Naive thymus-derived CD8-positive, alpha-beta T cell (primary cell): ENCODE measurements at regions of chr1 and their contacts with region 1.

Region 1: DNA sequence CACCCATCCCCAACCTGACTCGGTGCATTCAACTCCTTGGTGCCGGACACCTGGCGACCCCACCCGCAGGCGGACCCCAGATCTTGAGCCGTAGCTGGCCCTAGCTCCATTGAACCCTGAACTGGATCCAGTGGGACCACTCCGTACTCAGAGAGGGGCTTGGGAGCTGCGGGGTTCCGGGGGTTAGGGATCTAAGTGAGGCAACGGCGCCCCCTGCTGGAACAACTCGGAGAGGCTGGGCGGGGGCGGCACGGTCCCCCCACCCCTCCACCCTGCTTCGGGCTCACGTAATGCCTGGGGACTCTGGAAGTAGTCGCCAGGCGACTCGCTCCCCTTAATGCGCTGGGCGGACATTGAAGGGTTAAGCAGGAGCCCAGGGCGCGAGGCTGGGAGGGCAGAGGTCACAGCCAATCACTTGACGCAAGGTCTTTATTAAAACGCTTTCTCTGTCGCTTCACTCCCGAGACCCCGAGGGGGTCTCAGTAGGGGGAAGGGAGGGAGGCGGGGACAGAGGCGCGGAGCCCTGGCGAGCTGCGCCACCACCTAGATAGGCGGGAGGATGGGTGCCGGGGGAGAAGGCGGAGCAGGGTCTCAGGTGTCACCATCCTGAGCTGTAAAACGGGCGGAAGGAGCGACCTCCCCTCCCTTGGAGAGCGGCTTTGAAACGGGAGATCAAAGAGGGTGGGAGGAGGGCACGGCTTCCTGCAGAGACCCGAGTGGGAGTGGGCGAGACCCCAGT is 704 bp upstream of the CRABP2 start:
- DNase-seq: peak; percentile 55 to 84 (median 75)
- ATAC-seq: peak; percentile 68 to 77
- H3K4me3 Mint-ChIP-seq: peak overlapping the region; percentile 85 to 98 (median 91)
- H3K27ac Mint-ChIP-seq: peak overlapping the region; percentile 53 to 95 (median 91)
- H3K4me1 Mint-ChIP-seq: peaks cover 13 to 35% (median 32%) of the 10 kb centered on the region in 4 donors
- H3K27me3 Mint-ChIP-seq: peaks cover 0 to 18% (median 13%) of the 10 kb centered on the region in 5 donors

Region 2: GRCh38 chr1:156641761-156642264 is 64.3 kb before region 1 on chr1 and contains the start of gene BCAN:
- POLR2A ChIA-PET with region 1: no interaction called
- DNase-seq: peak in 2 of 10 donors; percentile 31 to 60
- ATAC-seq: peak; percentile 26 to 66
- H3K4me3 Mint-ChIP-seq: peak within 1 kb of the TSS; percentile 55 to 88 (median 72)
- H3K27ac Mint-ChIP-seq: peak within 1 kb of the TSS in 4 of 10 donors; percentile 9 to 77 (median 20)
- H3K4me1 Mint-ChIP-seq: peaks cover 19 to 38% (median 31%) of the 10 kb centered on the region in 4 donors
- H3K27me3 Mint-ChIP-seq: peaks cover 53 to 91% (median 77%) of the 10 kb centered on the region in 5 donors
- polyA plus RNA-seq, gene BCAN: not detected

Region 3: DNA sequence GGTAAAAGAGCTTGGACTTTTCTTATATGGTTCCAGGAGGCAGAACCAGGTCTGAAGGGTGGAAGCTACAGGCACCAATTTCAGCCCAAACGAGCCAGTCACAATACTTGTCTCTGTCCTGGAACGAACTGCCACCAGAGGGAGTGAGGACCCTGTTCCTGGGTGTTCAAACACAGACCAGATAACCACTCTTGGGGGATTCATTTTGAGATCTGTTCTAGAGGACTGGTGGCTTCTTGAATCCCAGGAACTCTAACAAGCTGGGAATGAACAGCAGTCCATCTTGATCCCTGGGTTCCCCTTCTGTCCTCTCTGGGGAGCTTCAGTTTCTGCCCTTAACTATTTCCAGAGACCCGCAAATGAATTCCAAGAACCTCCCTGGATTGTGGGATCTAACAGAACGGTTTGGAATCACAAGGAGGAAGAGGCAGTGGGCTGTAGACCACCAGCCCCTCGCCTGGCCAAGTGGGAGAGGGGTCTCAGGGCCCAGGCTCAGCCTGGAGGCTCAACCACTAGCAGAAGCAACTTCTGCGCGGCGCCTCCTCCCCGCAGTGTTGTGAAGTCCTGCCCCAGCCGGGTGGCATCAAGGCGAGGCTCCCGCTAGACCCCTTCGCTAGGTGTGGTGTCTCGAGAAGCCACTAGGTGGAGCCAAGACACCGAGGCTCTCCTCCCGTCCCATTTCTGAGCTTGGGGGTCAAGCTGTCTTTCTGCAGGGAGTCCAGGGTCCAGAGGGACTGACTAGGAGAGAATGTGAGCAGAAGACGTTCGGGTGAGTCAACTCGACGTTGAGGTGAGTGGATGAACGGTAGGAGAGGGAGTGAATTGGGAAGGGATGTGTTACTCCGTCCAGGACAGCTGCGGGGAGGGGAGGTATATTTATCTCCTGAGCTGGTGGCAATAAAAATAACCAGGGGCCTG is 16.8 kb before region 1 on chr1:
- POLR2A ChIA-PET with region 1: interaction called, 15 read pairs
- DNase-seq: peak; percentile 63 to 89 (median 76)
- ATAC-seq: peak; percentile 97
- H3K4me3 Mint-ChIP-seq: peak overlapping the region in 9 of 10 donors; percentile 13 to 87 (median 59)
- H3K27ac Mint-ChIP-seq: peak overlapping the region in 5 of 10 donors; percentile 71 to 87 (median 82)
- H3K4me1 Mint-ChIP-seq: peaks cover 18 to 36% (median 29%) of the 10 kb centered on the region in 4 donors
- H3K27me3 Mint-ChIP-seq: peaks cover 21 to 59% (median 37%) of the 10 kb centered on the region in 5 donors